Vagina (tissue), 2 donors: ENCODE measurements at regions of chr12 and their contacts with region 1.

Region 1: DNA sequence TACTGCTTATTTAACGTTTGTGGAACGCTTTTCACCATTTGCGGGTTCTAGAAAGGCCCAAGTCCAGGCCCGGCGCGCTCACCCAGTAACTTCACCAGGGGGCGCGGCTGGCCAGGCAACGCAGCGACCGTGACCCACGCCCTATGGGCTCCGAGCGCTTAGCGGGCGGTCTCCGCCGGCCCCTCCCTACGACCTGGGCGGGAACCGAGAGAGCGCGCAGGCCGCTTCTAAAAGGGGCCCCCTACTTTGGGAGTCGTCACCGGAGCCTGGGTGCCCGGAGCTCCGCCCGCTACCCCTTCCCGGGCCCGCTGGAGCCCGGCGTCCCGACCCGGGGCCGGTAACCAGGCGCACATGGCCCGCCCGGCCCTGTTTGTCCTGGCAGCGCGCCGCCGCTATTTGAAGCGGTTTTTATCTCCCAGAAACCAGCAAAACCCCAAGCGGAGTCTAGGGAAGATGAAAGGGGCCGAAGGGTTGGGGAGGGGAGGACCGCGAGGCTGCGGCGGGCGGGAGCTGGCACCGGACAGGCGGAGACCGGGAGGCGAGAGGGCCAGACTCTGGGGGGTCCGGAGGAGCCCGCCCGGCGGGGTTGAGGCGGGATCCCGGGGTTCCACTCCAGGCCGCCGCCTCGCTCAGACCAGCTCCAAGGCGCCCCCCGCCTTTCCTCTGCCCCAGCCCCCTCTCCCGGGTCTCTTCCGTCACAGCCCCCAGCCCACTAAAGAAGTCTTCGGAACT is 3.5 kb upstream of the AAAS start:
- DNase-seq: peak in 1 of 2 donors; percentile 93
- H3K4me3 ChIP-seq: peak overlapping the region; percentile 71 to 80
- H3K27ac ChIP-seq: peak overlapping the region; percentile 93
- H3K4me1 ChIP-seq: peaks cover 44% of the 10 kb centered on the region
- H3K27me3 ChIP-seq: no peaks in the 10 kb centered on the region
- CTCF ChIP-seq: peak; percentile 79 to 87 (median 81)
- POLR2A ChIP-seq: peak in 1 of 2 donors; percentile 74

Region 2: GRCh38 chr12:53344824-53345485 is 20.0 kb after region 1 on chr12:
- intact Hi-C with region 1: loop called (anchors 2 kb)
- DNase-seq: no peak
- H3K4me3 ChIP-seq: peak overlapping the region; percentile 62 to 90
- H3K27ac ChIP-seq: peak overlapping the region; percentile 81
- H3K4me1 ChIP-seq: peaks cover 15% of the 10 kb centered on the region
- H3K27me3 ChIP-seq: no peaks in the 10 kb centered on the region
- CTCF ChIP-seq: peak; percentile 42 to 95 (median 54)
- POLR2A ChIP-seq: peak in 1 of 2 donors; percentile 31

Region 3: GRCh38 chr12:53618275-53618674 is 293.3 kb after region 1 on chr12:
- intact Hi-C with region 1: no loop called
- DNase-seq: no peak
- H3K4me3 ChIP-seq: no peak overlapping the region
- H3K27ac ChIP-seq: no peak overlapping the region
- H3K4me1 ChIP-seq: peaks cover 89% of the 10 kb centered on the region
- H3K27me3 ChIP-seq: no peaks in the 10 kb centered on the region
- CTCF ChIP-seq: no peak
- POLR2A ChIP-seq: no peak